ENCODE measurements at regions of chr1 and their contacts with region 1.

Region 1: DNA sequence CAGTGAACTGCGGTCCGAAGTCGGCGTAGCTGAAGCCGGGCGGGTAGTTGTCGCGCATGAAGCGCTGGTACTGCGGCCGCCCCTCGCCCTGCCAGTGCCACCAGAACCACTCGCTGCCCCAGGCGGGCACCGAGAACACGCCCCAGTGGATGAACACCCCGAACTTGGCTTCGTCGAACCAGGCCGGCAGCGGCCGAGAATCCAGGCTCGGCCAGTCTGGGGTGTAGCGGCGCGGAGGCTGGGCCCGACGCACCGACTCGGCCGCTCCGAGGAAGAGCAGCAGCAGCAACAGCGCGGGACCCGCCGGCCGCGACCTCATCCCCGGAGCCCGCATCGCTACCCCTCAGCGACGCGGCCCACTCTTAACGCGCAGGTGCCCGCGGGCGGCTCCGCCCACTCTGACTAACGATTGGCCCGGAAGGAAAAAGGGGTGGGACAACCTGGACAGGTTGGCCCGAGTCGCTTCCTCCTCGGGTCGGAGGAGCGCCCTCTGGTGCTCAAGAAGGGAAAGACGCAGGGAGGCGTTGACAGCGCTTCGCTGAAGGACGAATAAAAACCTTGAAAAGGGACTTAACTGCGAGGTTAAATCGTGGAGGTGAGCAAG is at the start of gene FUCA1:
- DNase-seq: peak; percentile 91 to 94
- ATAC-seq: peak; percentile 97 to 99 (median 98)
- H3K4me3 ChIP-seq: peak within 1 kb of the TSS; percentile 49 to 95 (median 85)
- H3K27ac ChIP-seq: peak within 1 kb of the TSS in 9 of 10 donors; percentile 71 to 86 (median 78)
- H3K4me1 ChIP-seq: peaks cover 5 to 45% (median 19%) of the 10 kb centered on the region in 9 donors
- H3K27me3 ChIP-seq: no peaks in the 10 kb centered on the region
- CTCF ChIP-seq: peak; percentile 92 to 99 (median 97)
- total RNA-seq, gene FUCA1: 10.6 to 34.0 (median 15.1) TPM

Region 2: GRCh38 chr1:23777979-23778814 is 89.9 kb before region 1 on chr1 and contains the start of gene PITHD1:
- intact Hi-C with region 1: loop called in 7 of 10 experiments (anchors 2 to 10 kb)
- DNase-seq: peak; percentile 78 to 81
- ATAC-seq: peak; percentile 86 to 94 (median 92)
- H3K4me3 ChIP-seq: peak within 1 kb of the TSS; percentile 74 to 100 (median 91)
- H3K27ac ChIP-seq: peak within 1 kb of the TSS; percentile 44 to 94 (median 90)
- H3K4me1 ChIP-seq: peaks cover 9 to 45% (median 29%) of the 10 kb centered on the region in 9 donors
- H3K27me3 ChIP-seq: no peaks in the 10 kb centered on the region
- CTCF ChIP-seq: no peak
- total RNA-seq, gene PITHD1: 37.6 to 52.8 (median 43.3) TPM

Region 3: DNA sequence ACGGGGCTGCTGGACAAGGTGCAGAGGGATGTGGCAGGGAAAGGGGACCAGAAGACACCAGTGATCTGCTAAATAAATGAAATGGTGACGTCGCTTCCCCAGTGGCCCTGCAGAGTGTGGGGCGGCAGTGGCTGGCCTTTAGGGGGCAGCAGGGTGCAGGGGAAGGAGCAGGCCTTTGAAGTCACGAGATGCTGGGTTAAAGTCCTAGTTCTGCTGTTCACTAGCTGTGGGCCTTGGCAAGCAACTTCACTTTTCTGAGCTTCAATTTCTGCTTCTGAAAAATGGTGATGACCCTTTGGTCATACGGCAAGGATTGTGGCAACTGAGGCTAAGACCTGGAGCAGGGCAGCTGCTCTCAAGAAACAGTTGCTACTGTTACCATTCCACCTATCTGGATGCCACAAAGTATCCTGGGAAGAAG is 58.3 kb before region 1 on chr1:
- intact Hi-C with region 1: loop called in 8 of 10 experiments (anchors 2 to 10 kb)
- DNase-seq: peak; percentile 62 to 75
- ATAC-seq: peak; percentile 70 to 91 (median 86)
- H3K4me3 ChIP-seq: no peak overlapping the region
- H3K27ac ChIP-seq: peak overlapping the region in 4 of 10 donors; percentile 6 to 72 (median 28)
- H3K4me1 ChIP-seq: peaks cover 0 to 27% (median 0%) of the 10 kb centered on the region in 9 donors
- H3K27me3 ChIP-seq: no peaks in the 10 kb centered on the region
- CTCF ChIP-seq: peak; percentile 49 to 92 (median 73)

Region 4: DNA sequence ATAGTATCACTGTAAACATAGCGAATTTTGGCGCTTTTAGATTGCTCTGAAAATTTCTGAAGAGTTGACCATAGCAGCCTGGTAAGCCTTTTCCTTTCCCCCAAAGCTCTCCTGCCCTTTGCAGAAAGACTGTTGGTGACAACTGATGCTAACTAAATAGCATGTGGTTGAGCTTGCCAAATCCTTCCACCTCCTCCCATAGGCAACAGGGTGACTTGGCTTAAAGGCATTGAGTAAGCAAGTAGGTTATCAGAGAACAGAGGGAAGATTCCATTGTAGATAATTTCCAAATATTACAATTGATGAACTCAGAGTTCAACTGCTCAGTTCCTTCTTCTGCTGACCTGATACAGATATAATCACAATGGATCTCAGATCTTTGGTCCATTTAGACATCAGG is 22.9 kb before region 1 on chr1:
- intact Hi-C with region 1: no loop called
- DNase-seq: no peak
- ATAC-seq: no peak
- H3K4me3 ChIP-seq: no peak overlapping the region
- H3K27ac ChIP-seq: no peak overlapping the region
- H3K4me1 ChIP-seq: peaks cover 0 to 18% (median 0%) of the 10 kb centered on the region in 9 donors
- H3K27me3 ChIP-seq: no peaks in the 10 kb centered on the region
- CTCF ChIP-seq: no peak

Region 5: DNA sequence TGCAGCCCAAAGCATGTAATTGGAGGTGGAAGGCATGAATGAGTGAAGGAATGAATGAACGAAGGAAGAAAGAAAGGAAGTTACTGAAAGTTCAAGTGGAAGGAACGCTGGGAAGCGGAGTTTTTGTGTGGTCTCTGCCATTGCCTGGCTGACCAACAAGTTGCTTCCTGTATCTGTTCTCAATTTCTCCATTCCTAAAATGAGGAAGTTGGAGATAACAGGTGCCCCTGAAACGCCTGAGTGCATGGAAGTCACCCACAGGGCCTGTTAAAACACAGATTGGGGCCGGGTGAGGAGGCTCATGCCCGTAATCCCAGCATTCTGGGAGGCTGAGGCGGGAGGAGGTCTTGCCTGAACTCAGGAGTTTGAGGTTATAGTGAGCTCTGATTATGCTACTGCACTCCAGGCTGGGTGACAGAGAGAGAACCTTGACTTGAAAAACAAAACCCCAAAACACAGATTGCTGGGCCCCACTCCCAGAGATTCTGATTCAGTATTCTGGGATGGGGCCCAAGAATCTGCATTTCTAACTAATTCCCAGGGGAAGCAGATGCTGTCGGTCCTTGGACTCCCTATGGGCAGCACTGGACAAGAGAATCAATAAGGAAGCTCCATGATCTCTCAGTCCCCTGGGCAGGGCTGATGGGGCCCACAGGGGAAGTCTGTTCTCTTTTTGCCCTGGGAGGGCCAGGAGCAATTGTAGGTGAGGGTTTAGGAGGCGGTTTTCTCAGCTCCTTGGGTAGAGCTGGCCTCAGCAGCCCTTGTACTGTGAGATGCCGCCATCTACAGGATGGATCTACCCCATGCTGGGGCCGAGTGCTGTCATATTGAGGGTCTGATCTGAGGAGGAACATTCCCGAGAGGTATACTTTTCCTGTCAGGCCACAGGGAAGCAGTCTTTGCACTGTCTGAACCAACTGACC is 48.4 kb after region 1 on chr1:
- intact Hi-C with region 1: loop called in 2 of 10 experiments (anchors 1 to 10 kb)
- DNase-seq: peak; percentile 51 to 56
- ATAC-seq: peak; percentile 73 to 86 (median 80)
- H3K4me3 ChIP-seq: no peak overlapping the region
- H3K27ac ChIP-seq: peak overlapping the region in 3 of 10 donors; percentile 6 to 27 (median 16)
- H3K4me1 ChIP-seq: peaks cover 0 to 33% (median 8%) of the 10 kb centered on the region in 9 donors
- H3K27me3 ChIP-seq: no peaks in the 10 kb centered on the region
- CTCF ChIP-seq: peak; percentile 34 to 76 (median 64)

Measured in heart right ventricle (tissue), 16 donors.